ENCODE measurements at regions of chr17 and their contacts with region 1.

Region 1: DNA sequence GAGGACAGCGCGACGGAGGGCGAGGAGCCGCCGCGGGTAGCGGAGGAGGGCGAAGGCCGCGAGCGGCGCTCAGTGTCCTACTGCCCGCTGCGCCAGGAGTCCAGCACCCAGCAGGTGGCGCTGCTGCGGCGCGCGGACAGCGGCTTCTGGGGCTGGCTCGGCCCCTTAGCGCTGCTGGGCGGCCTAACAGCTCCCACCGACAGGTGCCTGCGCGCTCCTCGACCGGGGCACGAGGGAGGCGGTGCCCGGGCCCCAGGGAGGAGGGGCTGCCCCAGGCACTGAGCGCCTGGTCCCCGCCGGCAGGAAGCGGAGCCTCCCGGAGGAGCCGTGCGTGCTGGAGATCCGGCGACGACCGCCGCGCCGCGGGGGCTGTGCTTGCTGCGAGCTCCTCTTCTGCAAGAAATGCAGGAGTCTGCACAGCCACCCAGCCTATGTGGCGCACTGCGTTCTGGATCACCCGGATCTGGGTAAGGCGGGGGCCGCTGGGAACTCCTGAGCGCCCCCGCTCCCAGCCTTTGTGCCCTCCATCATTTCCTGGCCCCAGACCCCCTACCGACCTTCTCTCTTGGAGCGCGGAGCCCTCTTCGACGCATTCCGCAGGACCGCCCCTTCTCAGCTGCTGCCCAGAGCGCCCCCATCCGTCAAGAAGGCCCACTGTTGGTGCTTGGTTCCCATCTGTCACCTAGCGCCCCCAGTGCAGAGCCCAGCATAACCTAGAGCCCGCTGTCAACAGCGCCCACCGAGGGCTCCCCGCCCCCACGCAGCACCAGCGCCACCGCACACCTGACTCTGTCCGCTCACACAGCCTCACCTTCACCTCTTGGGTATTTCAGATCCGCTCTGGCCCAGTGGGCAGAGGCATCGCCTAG is 3.7 kb downstream of the C17orf50 start:
- DNase-seq: peak; percentile 96 to 98
- ATAC-seq: peak; percentile 94 to 95
- H3K4me3 ChIP-seq: peak overlapping the region; percentile 65
- H3K27ac ChIP-seq: peak overlapping the region; percentile 82 to 87
- H3K4me1 ChIP-seq: no peaks in the 10 kb centered on the region
- CTCF ChIP-seq: peak; percentile 94
- EP300 ChIP-seq: no peak
- POLR2A ChIP-seq: no peak; the same call in none of the 2 replicates
- RAD21 ChIP-seq: peak; percentile 85 to 96

Region 2: GRCh38 chr17:35612924-35613521 is 151.3 kb before region 1 on chr17:
- CTCF ChIA-PET with region 1: interaction called, 19 read pairs
- POLR2A ChIA-PET with region 1: no interaction called
- DNase-seq: peak in 1 of 2 experiments; percentile 68
- ATAC-seq: peak; percentile 84 to 92; a peak in 5 of 6 replicates
- H3K4me3 ChIP-seq: no peak overlapping the region
- H3K27ac ChIP-seq: no peak overlapping the region
- H3K4me1 ChIP-seq: peaks cover 6% of the 10 kb centered on the region; the same call in 2 of the 3 replicates
- CTCF ChIP-seq: peak; percentile 91
- EP300 ChIP-seq: no peak
- POLR2A ChIP-seq: no peak
- RAD21 ChIP-seq: peak; percentile 72 to 76

Region 3: GRCh38 chr17:35695613-35696012 is 68.7 kb before region 1 on chr17:
- CTCF ChIA-PET with region 1: interaction called, 13 read pairs
- POLR2A ChIA-PET with region 1: no interaction called
- DNase-seq: no peak
- ATAC-seq: no peak
- H3K4me3 ChIP-seq: no peak overlapping the region
- H3K27ac ChIP-seq: no peak overlapping the region
- H3K4me1 ChIP-seq: no peaks in the 10 kb centered on the region
- CTCF ChIP-seq: no peak
- EP300 ChIP-seq: no peak
- POLR2A ChIP-seq: no peak
- RAD21 ChIP-seq: no peak

Region 4: GRCh38 chr17:35731239-35731931 is 33.0 kb before region 1 on chr17 and contains the start of gene RASL10B:
- CTCF ChIA-PET with region 1: interaction called, 17 read pairs
- POLR2A ChIA-PET with region 1: no interaction called
- DNase-seq: no peak
- ATAC-seq: peak; percentile 37 to 59; a peak in 4 of 6 replicates
- H3K4me3 ChIP-seq: peak within 1 kb of the TSS; percentile 43
- H3K27ac ChIP-seq: peak within 1 kb of the TSS; percentile 31 to 82; a peak in 4 of 6 replicates
- H3K4me1 ChIP-seq: no peaks in the 10 kb centered on the region
- CTCF ChIP-seq: no peak
- EP300 ChIP-seq: no peak
- POLR2A ChIP-seq: no peak
- RAD21 ChIP-seq: no peak
- polyA plus RNA-seq, gene RASL10B: 0.05 and 0.07 TPM in 2 replicates

Region 5: DNA sequence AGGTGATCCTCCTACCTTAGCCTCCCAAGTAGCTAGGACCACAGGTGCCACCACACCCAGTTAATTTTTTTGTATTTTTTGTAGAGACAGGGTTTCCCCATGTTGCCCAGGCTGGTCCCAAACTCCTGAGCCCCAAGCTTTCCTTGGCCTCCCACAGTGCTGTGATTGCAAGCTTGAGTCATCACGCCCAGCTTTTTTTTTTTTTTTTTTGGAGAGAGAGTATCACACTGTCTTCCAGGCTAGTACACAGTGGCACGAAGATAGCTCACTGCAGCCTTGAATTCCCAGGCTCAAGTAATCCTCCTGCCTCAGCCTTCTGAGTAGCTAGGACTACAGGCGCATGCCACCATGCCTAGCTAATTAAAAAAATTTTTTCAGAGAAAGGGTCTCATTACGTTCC is 77.1 kb after region 1 on chr17:
- CTCF ChIA-PET with region 1: interaction called, 12 read pairs
- POLR2A ChIA-PET with region 1: no interaction called
- DNase-seq: no peak
- ATAC-seq: peak in 1 of 2 experiments; percentile 56; a peak in 3 of 6 replicates
- H3K4me3 ChIP-seq: no peak overlapping the region
- H3K27ac ChIP-seq: no peak overlapping the region
- H3K4me1 ChIP-seq: peaks cover 6% of the 10 kb centered on the region; the same call in 2 of the 3 replicates
- CTCF ChIP-seq: no peak
- EP300 ChIP-seq: no peak
- POLR2A ChIP-seq: no peak
- RAD21 ChIP-seq: no peak

Region 6: GRCh38 chr17:36111068-36111490 is 346.7 kb after region 1 on chr17:
- CTCF ChIA-PET with region 1: no interaction called
- POLR2A ChIA-PET with region 1: no interaction called
- DNase-seq: no peak
- ATAC-seq: no peak
- H3K4me3 ChIP-seq: no peak overlapping the region
- H3K27ac ChIP-seq: no peak overlapping the region
- H3K4me1 ChIP-seq: no peaks in the 10 kb centered on the region
- CTCF ChIP-seq: no peak
- EP300 ChIP-seq: no peak
- POLR2A ChIP-seq: no peak
- RAD21 ChIP-seq: no peak

Measured in A549 (cell line).